ENCODE measurements at regions of chr12 and their contacts with region 1.

Region 1: DNA sequence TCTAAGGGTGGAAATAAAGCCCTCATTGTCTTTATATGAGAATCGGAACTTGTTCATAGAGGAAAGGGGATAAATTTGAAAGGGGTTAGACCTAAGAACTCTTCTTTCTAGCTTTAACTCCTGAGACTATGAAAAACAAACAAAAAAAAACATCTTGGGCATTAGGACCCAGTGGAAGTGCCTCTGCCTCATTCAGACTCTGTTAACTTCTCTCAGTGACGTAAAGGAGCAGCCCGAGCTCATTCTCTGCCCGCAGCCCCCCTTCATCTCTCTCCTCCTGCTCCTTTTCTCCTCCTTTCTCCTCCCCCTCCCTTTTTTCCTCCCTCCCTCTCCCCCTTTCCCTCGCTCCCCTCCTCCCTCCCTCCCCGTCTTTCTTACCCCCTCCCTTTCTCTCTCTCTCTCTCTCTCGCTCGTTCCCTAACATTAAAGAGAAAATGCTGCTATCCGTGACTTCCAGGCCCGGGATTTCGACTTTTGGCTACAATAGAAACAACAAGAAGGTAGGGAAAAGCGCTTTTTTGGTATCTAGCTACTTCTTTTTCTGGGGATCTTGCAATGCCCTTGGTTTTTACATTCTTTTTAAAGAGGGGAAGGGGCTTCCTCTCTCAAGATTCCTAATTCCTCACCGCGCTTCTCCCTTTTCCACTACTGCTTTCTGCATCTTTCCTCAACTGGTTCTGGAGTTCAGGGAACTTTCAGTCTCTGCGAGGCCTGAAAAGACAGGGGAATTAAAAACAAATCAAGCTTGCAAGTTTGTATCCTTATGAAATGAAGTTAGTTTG is at the start of gene RBMS2:
- DNase-seq: peak; percentile 46 to 94 (median 78)

Region 2: GRCh38 chr12:56571126-56571525 is 49.3 kb after region 1 on chr12:
- intact Hi-C with region 1: loop called (anchors 5 kb)
- DNase-seq: no peak

Measured in head of caudate nucleus (tissue), 42 donors.